ENCODE measurements at regions of chr16 and their contacts with region 1.

Region 1: DNA sequence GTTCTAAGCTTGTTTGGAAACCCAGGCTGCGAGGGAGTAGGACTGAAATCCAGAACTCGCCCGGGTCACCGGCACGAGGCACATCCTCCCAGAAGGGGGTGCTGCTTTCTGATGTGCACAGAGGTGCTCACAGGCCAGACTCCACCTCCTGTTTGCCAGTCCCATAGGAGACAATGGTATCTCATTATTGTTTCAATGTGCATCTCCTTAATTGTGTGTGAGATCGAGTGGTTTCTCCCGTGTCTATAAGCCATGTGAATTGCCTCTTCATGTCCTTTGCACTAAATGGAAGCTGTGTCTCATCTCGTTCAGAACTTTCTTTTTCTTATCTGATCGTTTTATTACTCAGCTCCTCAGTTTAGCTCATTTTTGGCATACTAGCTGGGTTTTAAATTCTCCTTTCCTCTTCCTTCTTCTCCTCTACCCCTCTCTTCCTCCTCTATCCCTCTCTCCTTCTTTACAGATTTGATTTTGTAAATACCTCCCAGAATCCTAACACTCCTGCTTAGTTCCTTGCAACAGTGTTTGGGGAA is 32.1 kb upstream of the PRKCB start:
- DNase-seq: peak; percentile 86
- ATAC-seq: peak; percentile 96
- H3K4me3 Mint-ChIP-seq: peak overlapping the region; percentile 25
- H3K27ac Mint-ChIP-seq: no peak overlapping the region
- H3K4me1 Mint-ChIP-seq: peaks cover 16% of the 10 kb centered on the region
- H3K27me3 Mint-ChIP-seq: peaks cover 5% of the 10 kb centered on the region

Region 2: GRCh38 chr16:23826528-23827045 is 22.9 kb after region 1 on chr16:
- CTCF ChIA-PET with region 1: interaction called, 24 read pairs
- DNase-seq: peak; percentile 51
- ATAC-seq: peak; percentile 84
- H3K4me3 Mint-ChIP-seq: peak overlapping the region; percentile 4
- H3K27ac Mint-ChIP-seq: peak overlapping the region; percentile 64
- H3K4me1 Mint-ChIP-seq: peaks cover 26% of the 10 kb centered on the region
- H3K27me3 Mint-ChIP-seq: peaks cover 8% of the 10 kb centered on the region

Region 3: GRCh38 chr16:23858542-23858941 is 54.9 kb after region 1 on chr16:
- CTCF ChIA-PET with region 1: interaction called, 13 read pairs
- DNase-seq: no peak
- ATAC-seq: no peak
- H3K4me3 Mint-ChIP-seq: no peak overlapping the region
- H3K27ac Mint-ChIP-seq: no peak overlapping the region
- H3K4me1 Mint-ChIP-seq: peaks cover 75% of the 10 kb centered on the region
- H3K27me3 Mint-ChIP-seq: no peaks in the 10 kb centered on the region

Region 4: GRCh38 chr16:24036614-24037013 is 233.0 kb after region 1 on chr16:
- CTCF ChIA-PET with region 1: interaction called, 108 read pairs
- DNase-seq: no peak
- ATAC-seq: peak; percentile 32
- H3K4me3 Mint-ChIP-seq: no peak overlapping the region
- H3K27ac Mint-ChIP-seq: peak overlapping the region; percentile 28
- H3K4me1 Mint-ChIP-seq: peaks cover 45% of the 10 kb centered on the region
- H3K27me3 Mint-ChIP-seq: no peaks in the 10 kb centered on the region

Region 5: GRCh38 chr16:24504472-24505345 is 701.1 kb after region 1 on chr16:
- CTCF ChIA-PET with region 1: interaction called, 29 read pairs
- DNase-seq: peak; percentile 66
- ATAC-seq: peak; percentile 94
- H3K4me3 Mint-ChIP-seq: no peak overlapping the region
- H3K27ac Mint-ChIP-seq: no peak overlapping the region
- H3K4me1 Mint-ChIP-seq: peaks cover 1% of the 10 kb centered on the region
- H3K27me3 Mint-ChIP-seq: peaks cover 16% of the 10 kb centered on the region

Measured in activated CD8-positive, alpha-beta memory T cell treated with anti-CD3 and anti-CD28 coated beads, Interleukin-2, amount 10 ng/mL, durations not matched to agents 7 days and 5 days (primary cell).